ENCODE measurements at regions of chr12 and their contacts with region 1.

Region 1: GRCh38 chr12:51970904-51971646 is 19.6 kb downstream of the ACVR1B start:
- DNase-seq: peak in 1 of 3 donors; percentile 36
- ATAC-seq: peak; percentile 70
- H3K4me3 ChIP-seq: no peak overlapping the region
- H3K4me1 ChIP-seq: peaks cover 38% of the 10 kb centered on the region
- CTCF ChIP-seq: peak; percentile 18

Region 2: GRCh38 chr12:51891843-51892242 is 79.2 kb before region 1 on chr12:
- intact Hi-C with region 1: loop called in 1 of 2 experiments (anchors 10 kb)
- DNase-seq: no peak
- ATAC-seq: no peak
- H3K4me3 ChIP-seq: no peak overlapping the region
- H3K4me1 ChIP-seq: peaks cover 9% of the 10 kb centered on the region
- CTCF ChIP-seq: no peak

Region 3: GRCh38 chr12:52023182-52023975 is 52.3 kb after region 1 on chr12:
- intact Hi-C with region 1: no loop called
- DNase-seq: peak; percentile 93 to 95 (median 93)
- ATAC-seq: peak; percentile 79
- H3K4me3 ChIP-seq: no peak overlapping the region
- H3K4me1 ChIP-seq: peaks cover 21% of the 10 kb centered on the region
- CTCF ChIP-seq: peak; percentile 98

Measured in mucosa of descending colon (tissue), 3 donors.